ENCODE measurements at regions of chr4 and their contacts with region 1.

Region 1: DNA sequence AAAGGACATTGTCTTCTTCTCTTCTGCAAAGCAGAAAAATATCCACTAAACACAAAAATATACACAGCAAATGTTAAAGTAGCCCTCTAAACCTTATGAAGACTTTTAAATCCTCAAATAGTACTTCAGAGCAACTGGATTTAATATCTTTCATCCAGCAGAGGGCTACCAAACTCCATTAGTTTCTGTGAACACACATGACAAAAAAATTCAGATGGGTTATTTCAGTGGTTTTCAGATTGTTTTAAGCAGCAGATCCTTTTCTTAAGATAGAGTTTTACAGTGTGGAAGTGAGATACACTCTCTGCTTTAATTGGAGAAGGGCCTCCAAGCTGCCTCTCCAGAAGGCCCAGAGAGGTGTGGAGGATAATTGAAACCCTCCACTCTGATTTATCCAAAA is 56.7 kb downstream of the ANK2 start:
- DNase-seq: no peak
- ATAC-seq: peak in 2 of 8 donors; percentile 44 to 63
- H3K4me3 ChIP-seq: no peak overlapping the region
- H3K27ac ChIP-seq: no peak overlapping the region
- H3K4me1 ChIP-seq: peaks cover 0 to 12% (median 0%) of the 10 kb centered on the region in 9 donors
- H3K27me3 ChIP-seq: no peaks in the 10 kb centered on the region
- CTCF ChIP-seq: peak in 8 of 9 donors; percentile 33 to 65 (median 48)

Region 2: DNA sequence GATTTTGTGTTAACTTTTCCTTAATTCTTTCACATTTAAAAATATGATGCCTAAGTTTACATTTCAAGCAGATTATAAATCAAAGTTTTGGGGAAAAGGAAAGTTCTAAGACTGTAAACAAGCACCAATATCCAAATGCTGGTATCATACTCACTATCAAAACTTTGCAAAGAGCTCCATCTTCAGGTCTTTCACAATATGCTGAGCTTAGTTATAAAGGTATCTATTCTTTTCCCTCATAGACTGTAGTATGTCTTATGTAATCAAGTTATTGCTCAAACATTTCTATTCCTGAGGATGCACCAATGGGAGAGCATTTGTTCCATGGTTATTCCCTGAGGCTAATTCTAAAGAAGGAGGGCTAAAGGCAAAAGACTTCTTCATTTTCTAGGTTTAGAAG is 1168.7 kb before region 1 on chr4:
- intact Hi-C with region 1: no loop called
- DNase-seq: no peak
- ATAC-seq: no peak
- H3K4me3 ChIP-seq: no peak overlapping the region
- H3K27ac ChIP-seq: no peak overlapping the region
- H3K4me1 ChIP-seq: no peaks in the 10 kb centered on the region
- H3K27me3 ChIP-seq: peaks cover 0 to 11% (median 7%) of the 10 kb centered on the region in 7 donors
- CTCF ChIP-seq: no peak

Region 3: GRCh38 chr4:113248320-113248719 is 142.2 kb after region 1 on chr4:
- intact Hi-C with region 1: loop called in 4 of 10 experiments (anchors 5 to 10 kb)
- DNase-seq: no peak
- ATAC-seq: peak in 1 of 8 donors; percentile 39
- H3K4me3 ChIP-seq: no peak overlapping the region
- H3K27ac ChIP-seq: no peak overlapping the region
- H3K4me1 ChIP-seq: no peaks in the 10 kb centered on the region
- H3K27me3 ChIP-seq: no peaks in the 10 kb centered on the region
- CTCF ChIP-seq: peak in 2 of 9 donors; percentile 6 to 26

Region 4: DNA sequence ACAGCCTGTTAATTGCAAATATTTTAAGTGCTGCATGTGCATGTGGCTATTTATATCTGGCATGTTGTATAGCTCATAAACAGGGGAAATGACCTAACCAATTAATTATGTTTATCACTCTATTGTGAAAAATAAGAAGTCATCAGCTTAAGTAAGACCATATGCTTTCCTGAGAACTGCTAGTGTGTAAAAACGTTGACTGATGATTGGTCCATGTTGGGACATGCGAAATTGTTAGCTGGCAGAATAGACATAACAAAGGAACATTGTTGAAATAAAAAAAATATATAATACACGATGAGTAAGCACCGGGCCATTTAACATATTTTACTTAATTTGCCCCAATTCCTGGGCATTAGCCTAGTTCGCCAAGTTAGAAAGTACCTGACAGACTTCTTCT is 150.8 kb after region 1 on chr4:
- intact Hi-C with region 1: loop called in 2 of 10 experiments (anchors 5 to 10 kb)
- DNase-seq: no peak
- ATAC-seq: peak in 1 of 8 donors; percentile 44
- H3K4me3 ChIP-seq: no peak overlapping the region
- H3K27ac ChIP-seq: no peak overlapping the region
- H3K4me1 ChIP-seq: peaks cover 0 to 4% (median 0%) of the 10 kb centered on the region in 9 donors
- H3K27me3 ChIP-seq: no peaks in the 10 kb centered on the region
- CTCF ChIP-seq: no peak

Region 5: GRCh38 chr4:113278324-113278934 is 172.3 kb after region 1 on chr4:
- intact Hi-C with region 1: loop called in 1 of 10 experiments (anchors 10 kb)
- DNase-seq: peak; percentile 34 to 81
- ATAC-seq: peak; percentile 80 to 91 (median 86)
- H3K4me3 ChIP-seq: no peak overlapping the region
- H3K27ac ChIP-seq: no peak overlapping the region
- H3K4me1 ChIP-seq: peaks cover 0 to 24% (median 6%) of the 10 kb centered on the region in 9 donors
- H3K27me3 ChIP-seq: no peaks in the 10 kb centered on the region
- CTCF ChIP-seq: peak; percentile 56 to 90 (median 84)

Measured in heart right ventricle (tissue), 16 donors.